Left lung (tissue), 14 donors: ENCODE measurements at regions of chr2 and their contacts with region 1.

Region 1: GRCh38 chr2:68196120-68196716 is 38.5 kb downstream of the PNO1 start:
- DNase-seq: peak in 2 of 4 donors; percentile 20 to 55
- ATAC-seq: peak; percentile 71
- H3K4me3 ChIP-seq: no peak overlapping the region
- H3K27ac ChIP-seq: no peak overlapping the region
- H3K4me1 ChIP-seq: peaks cover 16 to 45% of the 10 kb centered on the region in 2 donors
- H3K27me3 ChIP-seq: no peaks in the 10 kb centered on the region
- CTCF ChIP-seq: peak in 1 of 2 donors; percentile 73

Region 2: DNA sequence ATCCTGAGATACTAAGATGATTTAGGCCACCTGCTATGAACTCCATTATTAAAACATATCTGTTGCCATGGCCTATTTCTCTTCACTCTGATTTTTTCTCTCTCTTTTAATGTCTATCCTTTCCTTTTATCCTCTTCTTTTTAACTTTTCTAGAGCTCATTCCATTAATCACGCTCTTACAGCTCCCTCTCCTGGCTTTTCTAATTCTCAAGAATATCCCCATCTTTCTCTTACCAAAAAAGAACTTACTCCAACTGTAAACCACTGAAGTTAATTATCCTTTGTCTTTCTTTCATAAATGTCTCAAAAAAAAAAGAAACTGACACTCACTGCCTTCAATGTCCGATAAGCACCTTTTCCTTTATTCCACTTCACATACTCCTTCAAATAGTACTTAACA is 48.2 kb after region 1 on chr2:
- intact Hi-C with region 1: loop called in 1 of 2 experiments (anchors 10 kb)
- DNase-seq: no peak
- ATAC-seq: no peak
- H3K4me3 ChIP-seq: no peak overlapping the region
- H3K27ac ChIP-seq: no peak overlapping the region
- H3K4me1 ChIP-seq: peaks cover 12 to 97% of the 10 kb centered on the region in 2 donors
- H3K27me3 ChIP-seq: no peaks in the 10 kb centered on the region
- CTCF ChIP-seq: no peak